H1 (cell line): ENCODE measurements at regions of chr6 and their contacts with region 1.

Region 1: DNA sequence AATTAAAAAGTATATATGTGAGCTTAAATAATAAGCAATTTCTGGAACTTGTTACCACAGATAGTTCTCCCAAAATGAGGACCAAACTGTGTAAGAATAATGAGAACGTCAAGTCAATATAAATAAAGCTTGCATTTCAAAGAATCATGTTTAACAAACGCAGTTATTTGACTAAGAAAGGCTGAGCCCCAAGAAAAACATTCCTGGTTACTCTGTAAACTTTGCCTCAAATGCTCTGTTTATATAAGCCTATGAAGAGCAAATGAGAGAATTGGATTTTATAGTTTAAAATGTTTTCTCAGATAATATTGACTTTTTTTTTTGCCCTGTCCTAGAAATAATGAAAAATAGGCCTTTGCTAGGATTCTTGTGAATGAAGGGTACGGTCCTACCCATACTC is 81.3 kb downstream of the C6orf52 start:
- DNase-seq: no peak
- H3K4me3 ChIP-seq: peak overlapping the region in 1 of 4 experiments; percentile 5; a peak in 1 of 8 replicates
- H3K27ac ChIP-seq: no peak overlapping the region
- H3K4me1 ChIP-seq: peaks cover 0 to 10% (median 2%) of the 10 kb centered on the region in 4 experiments; a peak in 4 of 7 replicates
- H3K27me3 ChIP-seq: no peaks in the 10 kb centered on the region
- CTCF ChIP-seq: no peak
- EP300 ChIP-seq: no peak
- POLR2A ChIP-seq: no peak
- RAD21 ChIP-seq: no peak

Region 2: DNA sequence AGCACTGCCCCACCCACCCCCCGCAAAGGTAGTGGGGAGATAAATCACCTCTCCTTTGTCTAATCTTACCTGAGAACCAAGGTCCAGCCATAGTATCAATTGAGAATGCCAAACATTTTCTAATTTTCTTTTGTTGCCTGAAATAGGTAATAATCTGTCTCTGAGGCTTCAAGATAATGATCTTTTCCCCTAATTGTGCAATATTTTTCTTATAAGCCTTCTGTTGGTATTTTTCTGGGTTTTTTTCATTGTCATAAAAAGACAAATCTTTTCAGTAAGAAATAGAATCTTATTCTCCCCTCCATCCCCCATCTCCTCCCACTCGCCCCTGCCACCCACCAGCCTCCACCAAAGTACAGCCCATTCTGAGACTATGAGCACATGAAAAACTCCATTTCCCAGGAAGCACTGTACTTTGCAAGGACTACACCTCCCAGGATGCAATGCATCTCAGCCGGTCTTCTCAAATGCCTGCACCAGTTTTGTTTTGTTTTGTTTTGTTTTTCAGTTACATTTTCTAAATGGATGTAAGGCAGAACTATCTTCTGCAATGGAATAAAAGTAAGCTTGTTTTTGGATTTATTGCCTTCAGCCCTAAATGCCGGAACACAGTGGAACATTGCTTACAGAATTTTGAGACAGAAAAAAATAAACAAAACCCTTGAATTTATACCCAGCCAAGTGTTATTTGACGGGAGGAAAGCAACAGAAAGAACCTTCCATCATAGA is 466.2 kb before region 1 on chr6:
- CTCF ChIA-PET with region 1: no interaction called
- POLR2A ChIA-PET with region 1: no interaction called
- DNase-seq: no peak
- H3K4me3 ChIP-seq: peak overlapping the region in 1 of 4 experiments; percentile 36; a peak in 1 of 8 replicates
- H3K27ac ChIP-seq: no peak overlapping the region
- H3K4me1 ChIP-seq: no peaks in the 10 kb centered on the region; a peak in 1 of 7 replicates
- H3K27me3 ChIP-seq: no peaks in the 10 kb centered on the region
- CTCF ChIP-seq: no peak
- EP300 ChIP-seq: no peak
- POLR2A ChIP-seq: no peak
- RAD21 ChIP-seq: no peak

Region 3: GRCh38 chr6:10595731-10596664 is 17.1 kb before region 1 on chr6:
- CTCF ChIA-PET with region 1: no interaction called
- POLR2A ChIA-PET with region 1: interaction called, 10 read pairs
- DNase-seq: no peak
- H3K4me3 ChIP-seq: peak overlapping the region in 1 of 4 experiments; percentile 9; a peak in 1 of 8 replicates
- H3K27ac ChIP-seq: peak overlapping the region; percentile 78
- H3K4me1 ChIP-seq: peaks cover 6 to 36% (median 20%) of the 10 kb centered on the region in 4 experiments
- H3K27me3 ChIP-seq: no peaks in the 10 kb centered on the region
- CTCF ChIP-seq: no peak
- EP300 ChIP-seq: no peak
- POLR2A ChIP-seq: no peak
- RAD21 ChIP-seq: no peak

Region 4: GRCh38 chr6:10809098-10809497 is 196.0 kb after region 1 on chr6:
- CTCF ChIA-PET with region 1: no interaction called
- POLR2A ChIA-PET with region 1: no interaction called
- DNase-seq: no peak
- H3K4me3 ChIP-seq: no peak overlapping the region
- H3K27ac ChIP-seq: no peak overlapping the region
- H3K4me1 ChIP-seq: no peaks in the 10 kb centered on the region
- H3K27me3 ChIP-seq: no peaks in the 10 kb centered on the region
- CTCF ChIP-seq: no peak
- EP300 ChIP-seq: no peak
- POLR2A ChIP-seq: no peak
- RAD21 ChIP-seq: no peak